ENCODE measurements at regions of chr15 and their contacts with region 1.

Region 1: DNA sequence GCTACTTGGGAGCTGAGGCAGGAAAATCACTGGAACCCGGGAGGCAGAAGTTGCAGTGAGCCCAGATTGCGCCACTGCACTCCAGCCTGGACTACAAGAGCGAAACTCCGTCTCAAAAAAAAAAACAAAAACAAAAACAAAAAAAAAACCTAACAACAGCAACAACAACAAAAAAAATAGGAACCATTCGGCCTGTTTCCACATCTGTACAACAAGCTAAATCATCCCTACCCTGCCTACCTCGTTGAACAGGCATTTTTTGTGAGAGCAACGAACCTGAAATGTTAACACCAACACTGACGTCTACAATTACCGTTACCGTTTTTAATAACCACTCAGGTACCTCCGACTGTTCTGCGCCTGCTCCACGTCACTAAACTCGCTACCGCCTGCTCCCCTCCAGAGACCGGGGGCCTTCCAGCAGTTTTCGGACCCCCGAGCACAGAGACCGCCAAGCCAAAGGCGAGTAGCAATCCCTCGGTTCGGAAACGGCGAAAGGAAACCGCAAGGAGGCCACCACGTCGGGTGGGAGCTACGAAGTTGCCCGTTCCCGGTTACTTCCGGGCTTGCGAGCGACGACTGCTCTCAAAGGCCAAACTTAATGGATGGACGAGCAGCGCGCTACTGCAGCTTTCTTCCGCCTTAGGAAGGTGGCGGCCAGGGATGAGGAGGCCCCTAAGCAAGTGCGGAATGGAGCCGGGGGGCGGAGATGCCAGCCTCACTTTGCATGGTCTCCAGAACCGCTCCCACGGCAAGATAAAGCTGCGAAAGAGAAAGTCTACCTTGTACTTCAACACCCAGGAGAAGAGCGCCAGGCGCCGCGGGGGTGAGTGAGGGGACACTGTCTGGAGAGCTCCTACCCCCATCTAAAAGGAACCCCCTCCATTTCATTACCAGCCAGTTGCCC is at the starts of genes PIGB and PIGBOS1:
- DNase-seq: peak; percentile 86 to 91 (median 90)
- ATAC-seq: peak; percentile 93 to 99 (median 99)
- H3K4me3 ChIP-seq: peak within 1 kb of the TSS; percentile 65 to 95 (median 76)
- H3K27ac ChIP-seq: peak within 1 kb of the TSS; percentile 19 to 95 (median 85)
- H3K4me1 ChIP-seq: peaks cover 4 to 58% (median 24%) of the 10 kb centered on the region in 12 donors
- H3K27me3 ChIP-seq: no peaks in the 10 kb centered on the region
- CTCF ChIP-seq: peak in 5 of 12 donors; percentile 6 to 28 (median 11)
- POLR2A ChIP-seq: peak in 1 of 2 donors; percentile 49
- total RNA-seq, gene PIGB: 2.4 to 10.3 (median 3.0) TPM
- total RNA-seq, gene PIGBOS1: 5.8 to 12.0 (median 7.7) TPM

Region 2: DNA sequence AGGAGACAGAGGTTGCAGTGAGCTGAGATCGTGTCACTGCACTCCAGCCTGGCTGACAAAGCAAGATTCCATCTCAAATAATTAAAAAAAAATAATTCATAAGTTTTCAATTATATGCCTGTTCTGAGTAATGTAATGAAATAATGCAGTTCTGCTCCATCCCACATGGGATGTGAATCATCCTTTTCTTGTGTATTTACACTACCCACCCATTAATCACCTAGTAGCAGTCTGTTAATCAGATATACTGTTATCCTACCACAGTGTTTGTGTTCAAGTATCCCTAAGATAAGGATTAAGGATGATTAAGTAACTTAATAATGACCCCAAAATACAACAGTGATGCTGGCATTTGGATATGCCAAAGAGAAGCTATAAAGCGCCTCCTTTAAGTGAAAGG is 38.9 kb after region 1 on chr15:
- intact Hi-C with region 1: no loop called
- DNase-seq: no peak
- ATAC-seq: no peak
- H3K4me3 ChIP-seq: no peak overlapping the region
- H3K27ac ChIP-seq: no peak overlapping the region
- H3K4me1 ChIP-seq: no peaks in the 10 kb centered on the region
- H3K27me3 ChIP-seq: no peaks in the 10 kb centered on the region
- CTCF ChIP-seq: no peak
- POLR2A ChIP-seq: no peak

Region 3: GRCh38 chr15:55372701-55373440 is 54.0 kb after region 1 on chr15:
- intact Hi-C with region 1: loop called in 1 of 10 experiments (anchors 10 kb)
- DNase-seq: no peak
- ATAC-seq: peak in 1 of 4 donors; percentile 32
- H3K4me3 ChIP-seq: no peak overlapping the region
- H3K27ac ChIP-seq: peak overlapping the region in 10 of 12 donors; percentile 5 to 74 (median 29)
- H3K4me1 ChIP-seq: peaks cover 0 to 16% (median 2%) of the 10 kb centered on the region in 12 donors
- H3K27me3 ChIP-seq: no peaks in the 10 kb centered on the region
- CTCF ChIP-seq: no peak
- POLR2A ChIP-seq: no peak

Measured in heart left ventricle (tissue), 16 donors.